Right lobe of liver (tissue), 6 donors: ENCODE measurements at regions of chr2 and their contacts with region 1.

Region 1: GRCh38 chr2:9326975-9327374 is 96.4 kb downstream of the ITGB1BP1 start:
- DNase-seq: no peak
- ATAC-seq: no peak
- H3K4me3 ChIP-seq: no peak overlapping the region
- H3K27ac ChIP-seq: no peak overlapping the region
- H3K4me1 ChIP-seq: no peaks in the 10 kb centered on the region
- H3K27me3 ChIP-seq: no peaks in the 10 kb centered on the region
- CTCF ChIP-seq: no peak
- POLR2A ChIP-seq: no peak

Region 2: GRCh38 chr2:9191041-9191481 is 135.9 kb before region 1 on chr2:
- intact Hi-C with region 1: loop called in 1 of 2 experiments (anchors 10 kb)
- DNase-seq: peak in 2 of 3 donors; percentile 50 to 70
- ATAC-seq: peak; percentile 50 to 86 (median 65)
- H3K4me3 ChIP-seq: no peak overlapping the region
- H3K27ac ChIP-seq: no peak overlapping the region
- H3K4me1 ChIP-seq: no peaks in the 10 kb centered on the region
- H3K27me3 ChIP-seq: no peaks in the 10 kb centered on the region
- CTCF ChIP-seq: no peak
- POLR2A ChIP-seq: no peak